ENCODE measurements at regions of chr11 and their contacts with region 1.

Region 1: GRCh38 chr11:47477323-47477722 is 28.4 kb upstream of the RAPSN start:
- DNase-seq: no peak
- H3K4me3 ChIP-seq: no peak overlapping the region
- H3K27ac ChIP-seq: no peak overlapping the region
- H3K4me1 ChIP-seq: peaks cover 5 to 10% of the 10 kb centered on the region in 2 donors
- H3K27me3 ChIP-seq: no peaks in the 10 kb centered on the region
- CTCF ChIP-seq: no peak
- POLR2A ChIP-seq: no peak

Region 2: GRCh38 chr11:47248664-47249377 is 228.5 kb before region 1 on chr11 and contains the start of gene ACP2:
- intact Hi-C with region 1: no loop called
- DNase-seq: peak; percentile 89 to 91
- H3K4me3 ChIP-seq: peak within 1 kb of the TSS; percentile 23 to 78 (median 44)
- H3K27ac ChIP-seq: peak within 1 kb of the TSS; percentile 23 to 88 (median 81)
- H3K4me1 ChIP-seq: peaks cover 16 to 27% of the 10 kb centered on the region in 2 donors
- H3K27me3 ChIP-seq: no peaks in the 10 kb centered on the region
- CTCF ChIP-seq: peak in 3 of 6 experiments; percentile 25 to 44 (median 39)
- POLR2A ChIP-seq: peak in 1 of 2 donors; percentile 69
- total RNA-seq, gene ACP2: 32.4 to 98.5 (median 73.3) TPM

Region 3: DNA sequence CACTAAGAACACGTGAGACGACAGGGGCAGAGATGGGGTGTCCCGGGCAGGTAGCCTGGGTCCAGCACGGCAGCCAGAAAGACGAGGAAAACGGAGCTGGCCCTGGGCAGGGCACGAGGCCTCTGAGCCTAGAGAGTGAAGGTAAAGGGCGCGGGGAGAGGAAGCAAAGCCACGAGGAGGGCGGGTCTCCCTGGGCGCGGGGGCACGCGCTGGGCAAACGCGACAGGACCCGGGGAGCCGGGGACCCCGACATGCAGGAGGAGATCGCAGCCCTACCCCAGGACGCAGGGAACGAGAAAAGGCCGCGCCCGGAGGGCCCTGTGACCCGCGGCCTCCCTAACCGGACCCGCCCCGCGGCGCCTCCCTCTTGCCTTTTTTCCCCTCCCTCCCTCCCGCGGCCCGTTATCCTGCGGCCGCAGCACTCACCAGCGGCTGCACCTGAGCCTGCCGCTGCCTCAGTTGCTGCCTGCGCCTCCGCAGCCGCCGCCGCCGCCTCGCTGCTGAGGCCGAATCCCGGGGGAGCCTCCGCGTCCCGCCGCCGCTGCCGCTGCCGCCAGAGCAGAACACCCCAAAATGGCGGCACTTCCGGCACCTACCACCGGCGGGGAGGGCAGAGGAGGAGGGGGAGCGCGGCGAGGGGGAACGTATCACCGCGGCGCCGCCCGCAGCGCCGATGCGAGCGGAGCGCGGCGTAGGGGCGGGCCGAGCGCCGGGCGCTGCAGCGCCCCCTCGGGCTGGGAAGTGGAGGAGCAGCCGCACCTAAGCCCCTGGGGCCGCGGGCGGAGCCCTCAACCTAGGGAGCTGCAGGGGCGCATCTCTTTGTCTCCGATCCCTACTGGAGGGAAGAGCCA is 75.5 kb after region 1 on chr11 and contains the start of gene CELF1:
- intact Hi-C with region 1: loop called (anchors 10 kb)
- DNase-seq: peak; percentile 90 to 92
- H3K4me3 ChIP-seq: peak within 1 kb of the TSS; percentile 28 to 91 (median 51)
- H3K27ac ChIP-seq: peak within 1 kb of the TSS; percentile 81 to 94 (median 93)
- H3K4me1 ChIP-seq: peaks cover 21 to 29% of the 10 kb centered on the region in 2 donors
- H3K27me3 ChIP-seq: no peaks in the 10 kb centered on the region
- CTCF ChIP-seq: peak in 5 of 6 experiments; percentile 75 to 98 (median 96)
- POLR2A ChIP-seq: peak in 1 of 2 donors; percentile 72
- total RNA-seq, gene CELF1: 87.3 to 144 (median 111) TPM

Measured in thyroid gland (tissue), 4 donors.